Endothelial cell of umbilical vein (primary cell): ENCODE measurements at regions of chr4 and their contacts with region 1.

Region 1: DNA sequence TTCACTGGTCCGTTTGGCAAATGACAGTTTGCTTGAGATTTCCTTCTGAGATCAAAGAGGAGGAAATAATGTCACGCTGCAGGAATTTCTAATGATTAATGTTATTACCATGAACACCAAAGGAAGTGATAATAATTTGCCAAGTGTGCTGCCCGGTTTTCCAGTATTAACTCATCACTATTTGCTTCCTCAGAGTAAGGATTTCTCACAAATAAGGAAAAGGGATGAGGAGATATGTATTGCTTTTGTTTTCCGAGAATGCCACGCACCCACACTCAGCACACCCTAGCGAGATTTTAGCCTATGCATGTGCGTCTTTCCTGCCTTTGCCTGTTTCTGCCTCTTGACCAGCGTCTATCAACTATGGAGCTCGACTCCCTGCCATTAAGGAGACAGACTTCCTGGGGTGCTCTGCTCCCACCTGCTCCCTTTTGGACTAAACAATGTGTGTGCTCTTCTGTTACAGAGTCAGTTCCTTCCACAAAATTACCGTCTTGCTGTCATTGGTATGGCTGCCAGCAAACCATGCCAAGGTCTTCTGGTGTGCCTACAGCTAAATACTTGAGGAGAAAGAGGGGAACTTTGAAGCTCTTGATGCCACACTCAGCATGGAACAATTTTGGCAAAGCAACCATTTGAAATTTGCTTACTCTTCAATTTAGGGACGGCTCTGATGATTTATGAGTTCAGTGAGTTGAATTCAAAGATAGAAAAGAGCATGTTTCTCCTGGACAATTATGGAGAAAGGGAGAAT is 393.1 kb upstream of the ZFP42 start:
- DNase-seq: peak; percentile 77
- H3K4me3 ChIP-seq: peak overlapping the region in 1 of 3 experiments; percentile 31
- H3K27ac ChIP-seq: peak overlapping the region; percentile 84
- H3K4me1 ChIP-seq: peaks cover 22% of the 10 kb centered on the region
- H3K27me3 ChIP-seq: no peaks in the 10 kb centered on the region
- CTCF ChIP-seq: no peak
- POLR2A ChIP-seq: no peak

Region 2: GRCh38 chr4:186669159-186669731 is 933.3 kb before region 1 on chr4:
- CTCF ChIA-PET with region 1: interaction called, 4 read pairs
- POLR2A ChIA-PET with region 1: no interaction called
- dilution Hi-C with region 1: no loop called
- intact Hi-C with region 1: loop called (anchors 2 kb)
- DNase-seq: peak; percentile 27
- H3K4me3 ChIP-seq: no peak overlapping the region
- H3K27ac ChIP-seq: no peak overlapping the region
- H3K4me1 ChIP-seq: no peaks in the 10 kb centered on the region
- H3K27me3 ChIP-seq: no peaks in the 10 kb centered on the region
- CTCF ChIP-seq: peak; percentile 7 to 23
- POLR2A ChIP-seq: no peak